ENCODE measurements at regions of chr15 and their contacts with region 1.

Region 1: DNA sequence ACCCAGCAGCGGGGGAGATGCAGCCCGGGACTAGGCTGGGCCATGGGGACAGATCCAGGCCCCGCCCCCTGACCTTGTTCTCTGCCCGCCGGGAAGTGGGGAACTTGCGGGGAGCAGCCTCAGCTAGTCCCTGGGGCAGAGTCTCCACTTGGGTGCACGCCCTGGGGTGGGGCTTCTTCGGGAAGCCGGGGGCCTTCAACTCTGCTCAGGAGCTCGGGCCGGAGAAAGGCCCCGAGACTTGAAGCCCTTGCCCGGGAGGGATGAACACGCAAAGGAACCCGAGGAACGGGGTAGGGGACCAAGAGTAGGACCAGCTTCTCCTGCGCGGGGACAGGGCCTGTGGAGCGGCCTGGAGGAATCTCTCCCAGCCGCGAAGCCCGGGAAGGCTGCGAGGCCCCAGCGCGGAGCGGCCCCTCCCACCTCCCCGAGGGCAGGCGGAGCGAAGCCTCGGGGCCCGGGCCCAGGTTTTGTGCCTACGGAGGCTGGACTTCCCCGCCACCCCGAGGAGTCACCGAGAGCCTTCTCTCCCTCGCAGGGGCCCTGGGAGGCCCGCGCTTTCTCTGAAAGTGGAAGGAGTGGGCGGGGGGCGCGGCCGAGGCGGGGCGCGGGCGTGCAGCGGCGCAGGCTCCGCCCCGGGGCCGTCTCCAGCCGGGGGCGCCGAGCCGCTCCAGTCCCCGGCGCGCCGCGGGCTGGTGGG is at the start of gene ITPKA:
- DNase-seq: no peak
- H3K4me3 ChIP-seq: peak within 1 kb of the TSS; percentile 69 to 81
- H3K27ac ChIP-seq: peak within 1 kb of the TSS; percentile 84
- H3K4me1 ChIP-seq: peaks cover 35% of the 10 kb centered on the region
- H3K27me3 ChIP-seq: no peaks in the 10 kb centered on the region
- CTCF ChIP-seq: no peak
- POLR2A ChIP-seq: peak in 1 of 2 donors; percentile 34
- total RNA-seq, gene ITPKA: not detected

Region 2: GRCh38 chr15:41416742-41417406 is 76.5 kb before region 1 on chr15 and contains the start of gene RTF1:
- intact Hi-C with region 1: no loop called
- DNase-seq: peak; percentile 92 to 96
- H3K4me3 ChIP-seq: peak within 1 kb of the TSS; percentile 68 to 78
- H3K27ac ChIP-seq: peak within 1 kb of the TSS; percentile 72
- H3K4me1 ChIP-seq: peaks cover 44% of the 10 kb centered on the region
- H3K27me3 ChIP-seq: no peaks in the 10 kb centered on the region
- CTCF ChIP-seq: no peak
- POLR2A ChIP-seq: peak in 1 of 2 donors; percentile 64
- total RNA-seq, gene RTF1: 32.2 TPM

Region 3: GRCh38 chr15:41544650-41545015 is 51.3 kb after region 1 on chr15:
- intact Hi-C with region 1: loop called (anchors 1 kb)
- DNase-seq: no peak
- H3K4me3 ChIP-seq: peak overlapping the region; percentile 80 to 86
- H3K27ac ChIP-seq: peak overlapping the region; percentile 69
- H3K4me1 ChIP-seq: peaks cover 14% of the 10 kb centered on the region
- H3K27me3 ChIP-seq: no peaks in the 10 kb centered on the region
- CTCF ChIP-seq: no peak
- POLR2A ChIP-seq: no peak